ENCODE measurements at regions of chr22 and their contacts with region 1.

Region 1: GRCh38 chr22:28855355-28856094 is 27.8 kb upstream of the ZNRF3 start:
- DNase-seq: peak; percentile 51 to 70 (median 63)
- ATAC-seq: peak; percentile 69
- H3K4me3 ChIP-seq: no peak overlapping the region
- H3K27ac ChIP-seq: no peak overlapping the region
- H3K4me1 ChIP-seq: no peaks in the 10 kb centered on the region
- H3K27me3 ChIP-seq: 0 out of 5 replicates have a peak, but pooled peaks cover 0 to 2% of the 10 kb centered on the region in 2 experiments
- CTCF ChIP-seq: peak; percentile 70 to 83 (median 75)
- EP300 ChIP-seq: no peak
- POLR2A ChIP-seq: no peak
- RAD21 ChIP-seq: peak; percentile 68 to 90

Region 2: GRCh38 chr22:28800308-28801077 is 55.0 kb before region 1 on chr22 and contains the start of gene XBP1:
- CTCF ChIA-PET with region 1: no interaction called
- POLR2A ChIA-PET with region 1: no interaction called
- in situ Hi-C with region 1: no loop called
- intact Hi-C with region 1: no loop called
- DNase-seq: peak; percentile 94 to 97 (median 95)
- ATAC-seq: peak; percentile 94
- H3K4me3 ChIP-seq: peak within 1 kb of the TSS; percentile 98
- H3K27ac ChIP-seq: peak within 1 kb of the TSS; percentile 98
- H3K4me1 ChIP-seq: peaks cover 8 to 9% of the 10 kb centered on the region in 2 experiments; a peak in 3 of 5 replicates
- H3K27me3 ChIP-seq: no peaks in the 10 kb centered on the region
- CTCF ChIP-seq: no peak
- EP300 ChIP-seq: no peak
- POLR2A ChIP-seq: peak; percentile 86
- RAD21 ChIP-seq: no peak
- polyA plus RNA-seq, gene XBP1: 25.0 to 28.6 TPM

Region 3: DNA sequence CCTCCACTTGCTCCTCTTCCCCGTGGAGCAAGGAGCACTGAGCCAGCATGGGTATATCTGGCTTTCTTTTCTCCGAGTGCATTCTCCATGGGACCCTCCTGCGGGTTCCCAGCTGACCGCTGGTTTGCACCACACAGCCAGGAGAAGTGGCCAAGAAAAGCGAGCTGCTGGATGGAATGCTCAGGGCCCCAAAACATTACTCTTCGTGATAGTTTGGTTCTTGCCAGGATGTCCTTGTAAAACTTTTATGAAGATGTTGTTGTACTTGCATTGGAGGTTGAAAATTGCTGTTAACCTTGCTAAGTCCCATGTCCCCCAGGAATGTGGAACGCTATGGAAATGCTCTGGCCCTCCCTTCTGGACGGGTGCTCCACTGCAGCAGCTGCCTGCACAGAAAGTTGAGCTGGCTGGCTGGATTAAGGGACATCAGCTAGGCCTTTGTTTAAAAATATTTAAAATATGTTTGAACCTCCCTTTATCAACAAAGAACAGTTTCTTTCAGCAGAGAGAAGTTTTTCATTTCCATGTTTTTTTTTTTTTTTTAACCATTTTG is 96.5 kb after region 1 on chr22:
- CTCF ChIA-PET with region 1: no interaction called
- POLR2A ChIA-PET with region 1: no interaction called
- in situ Hi-C with region 1: no loop called
- intact Hi-C with region 1: loop called (anchors 10 kb)
- DNase-seq: no peak
- ATAC-seq: no peak
- H3K4me3 ChIP-seq: no peak overlapping the region
- H3K27ac ChIP-seq: no peak overlapping the region
- H3K4me1 ChIP-seq: no peaks in the 10 kb centered on the region; a peak in 1 of 5 replicates
- H3K27me3 ChIP-seq: no peaks in the 10 kb centered on the region
- CTCF ChIP-seq: peak in 1 of 3 experiments; percentile 15; a peak in 1 of 6 replicates
- EP300 ChIP-seq: no peak
- POLR2A ChIP-seq: no peak
- RAD21 ChIP-seq: peak in 1 of 2 experiments; percentile 16; a peak in 1 of 4 replicates

Region 4: GRCh38 chr22:29040385-29041275 is 185.1 kb after region 1 on chr22:
- CTCF ChIA-PET with region 1: interaction called, 33 read pairs
- POLR2A ChIA-PET with region 1: interaction called, 5 read pairs
- in situ Hi-C with region 1: loop called (anchors 5 kb)
- intact Hi-C with region 1: loop called (anchors 1 kb)
- DNase-seq: peak; percentile 45 to 77 (median 50)
- ATAC-seq: peak; percentile 88
- H3K4me3 ChIP-seq: no peak overlapping the region
- H3K27ac ChIP-seq: no peak overlapping the region
- H3K4me1 ChIP-seq: no peaks in the 10 kb centered on the region; a peak in 1 of 5 replicates
- H3K27me3 ChIP-seq: no peaks in the 10 kb centered on the region
- CTCF ChIP-seq: peak; percentile 74 to 82 (median 81)
- EP300 ChIP-seq: no peak
- POLR2A ChIP-seq: no peak
- RAD21 ChIP-seq: peak; percentile 76 to 88

Region 5: GRCh38 chr22:29154364-29155048 is 299.0 kb after region 1 on chr22:
- CTCF ChIA-PET with region 1: interaction called, 4 read pairs
- POLR2A ChIA-PET with region 1: no interaction called
- in situ Hi-C with region 1: loop called (anchors 10 kb)
- intact Hi-C with region 1: no loop called
- DNase-seq: peak; percentile 69 to 84 (median 76)
- ATAC-seq: peak; percentile 76
- H3K4me3 ChIP-seq: no peak overlapping the region
- H3K27ac ChIP-seq: peak overlapping the region; percentile 94
- H3K4me1 ChIP-seq: peaks cover 14 to 24% of the 10 kb centered on the region in 2 experiments
- H3K27me3 ChIP-seq: no peaks in the 10 kb centered on the region
- CTCF ChIP-seq: peak; percentile 87 to 93 (median 88)
- EP300 ChIP-seq: no peak
- POLR2A ChIP-seq: no peak
- RAD21 ChIP-seq: peak; percentile 71 to 81

Region 6: GRCh38 chr22:29259253-29259899 is 403.9 kb after region 1 on chr22:
- CTCF ChIA-PET with region 1: no interaction called
- POLR2A ChIA-PET with region 1: no interaction called
- in situ Hi-C with region 1: loop called (anchors 10 kb)
- intact Hi-C with region 1: no loop called
- DNase-seq: peak in 1 of 4 experiments; percentile 20
- ATAC-seq: peak; percentile 79
- H3K4me3 ChIP-seq: no peak overlapping the region
- H3K27ac ChIP-seq: no peak overlapping the region
- H3K4me1 ChIP-seq: peaks cover 0 to 30% of the 10 kb centered on the region in 2 experiments; a peak in 2 of 5 replicates
- H3K27me3 ChIP-seq: no peaks in the 10 kb centered on the region
- CTCF ChIP-seq: peak in 2 of 3 experiments; percentile 19 to 38; a peak in 4 of 6 replicates
- EP300 ChIP-seq: no peak
- POLR2A ChIP-seq: no peak
- RAD21 ChIP-seq: no peak

Measured in K562 (cell line).